ENCODE measurements at regions of chr15 and their contacts with region 1.

Region 1: GRCh38 chr15:56017920-56018319 is 24.5 kb upstream of the NEDD4 start:
- DNase-seq: peak; percentile 83
- ATAC-seq: peak; percentile 92
- H3K4me3 ChIP-seq: peak overlapping the region in 2 of 3 experiments; percentile 14 to 41; a peak in 1 of 6 replicates
- H3K27ac ChIP-seq: no peak overlapping the region
- H3K4me1 ChIP-seq: peaks cover 22% of the 10 kb centered on the region
- H3K27me3 ChIP-seq: no peaks in the 10 kb centered on the region
- CTCF ChIP-seq: peak; percentile 45
- EP300 ChIP-seq: no peak
- POLR2A ChIP-seq: no peak
- RAD21 ChIP-seq: no peak

Region 2: DNA sequence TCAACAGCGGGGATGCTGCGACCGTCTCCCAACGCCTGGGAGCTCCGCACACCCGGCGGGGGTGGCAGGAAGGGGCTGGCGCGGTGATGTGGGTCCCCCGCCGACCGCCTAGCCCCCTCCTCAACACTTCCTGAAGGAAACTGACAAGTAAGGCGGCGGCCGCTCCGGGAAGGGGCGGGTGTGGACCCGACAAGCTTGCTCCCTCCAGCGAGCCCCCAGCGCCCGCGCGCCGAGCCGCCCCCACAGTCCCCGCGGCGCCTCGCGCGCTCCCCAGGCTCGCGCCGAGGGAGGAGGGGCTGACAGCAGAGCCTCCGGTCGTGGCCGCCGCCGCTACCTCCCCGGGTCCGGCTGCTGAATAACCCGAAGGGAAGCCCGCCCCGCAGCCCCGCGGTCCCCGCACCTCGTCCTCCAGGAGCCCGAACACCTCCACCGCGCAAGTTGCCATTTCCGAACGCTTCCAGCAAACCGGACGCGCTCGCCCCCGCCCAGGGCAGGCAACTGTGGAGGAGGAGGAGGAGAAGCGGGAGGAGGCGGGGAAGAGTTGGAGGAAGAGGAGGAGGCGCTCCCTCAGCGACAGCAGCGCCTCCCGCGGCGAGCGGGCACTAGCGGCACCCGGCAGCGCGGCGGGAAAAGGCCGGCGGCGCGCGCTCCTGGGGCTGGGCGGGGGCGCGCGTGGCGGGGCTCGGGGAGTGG is 24.7 kb before region 1 on chr15 and contains the start of gene NEDD4:
- CTCF ChIA-PET with region 1: no interaction called
- POLR2A ChIA-PET with region 1: interaction called, 12 read pairs
- in situ Hi-C with region 1: no loop called
- intact Hi-C with region 1: no loop called
- DNase-seq: peak; percentile 76
- ATAC-seq: peak; percentile 94
- H3K4me3 ChIP-seq: peak within 1 kb of the TSS; percentile 89 to 94 (median 90)
- H3K27ac ChIP-seq: peak within 1 kb of the TSS; percentile 83
- H3K4me1 ChIP-seq: peaks cover 16% of the 10 kb centered on the region
- H3K27me3 ChIP-seq: no peaks in the 10 kb centered on the region; a peak in 1 of 5 replicates
- CTCF ChIP-seq: peak; percentile 79
- EP300 ChIP-seq: no peak
- POLR2A ChIP-seq: peak; percentile 48 to 71
- RAD21 ChIP-seq: peak; percentile 27
- total RNA-seq, gene NEDD4: 13.0 and 25.6 TPM in 2 replicates

Region 3: GRCh38 chr15:56034514-56034913 is 16.6 kb after region 1 on chr15:
- CTCF ChIA-PET with region 1: no interaction called
- POLR2A ChIA-PET with region 1: interaction called, 17 read pairs
- in situ Hi-C with region 1: no loop called
- intact Hi-C with region 1: loop called (anchors 1 kb)
- DNase-seq: no peak
- ATAC-seq: no peak
- H3K4me3 ChIP-seq: no peak overlapping the region
- H3K27ac ChIP-seq: no peak overlapping the region
- H3K4me1 ChIP-seq: peaks cover 20% of the 10 kb centered on the region
- H3K27me3 ChIP-seq: no peaks in the 10 kb centered on the region
- CTCF ChIP-seq: no peak
- EP300 ChIP-seq: no peak
- POLR2A ChIP-seq: no peak
- RAD21 ChIP-seq: no peak

Region 4: DNA sequence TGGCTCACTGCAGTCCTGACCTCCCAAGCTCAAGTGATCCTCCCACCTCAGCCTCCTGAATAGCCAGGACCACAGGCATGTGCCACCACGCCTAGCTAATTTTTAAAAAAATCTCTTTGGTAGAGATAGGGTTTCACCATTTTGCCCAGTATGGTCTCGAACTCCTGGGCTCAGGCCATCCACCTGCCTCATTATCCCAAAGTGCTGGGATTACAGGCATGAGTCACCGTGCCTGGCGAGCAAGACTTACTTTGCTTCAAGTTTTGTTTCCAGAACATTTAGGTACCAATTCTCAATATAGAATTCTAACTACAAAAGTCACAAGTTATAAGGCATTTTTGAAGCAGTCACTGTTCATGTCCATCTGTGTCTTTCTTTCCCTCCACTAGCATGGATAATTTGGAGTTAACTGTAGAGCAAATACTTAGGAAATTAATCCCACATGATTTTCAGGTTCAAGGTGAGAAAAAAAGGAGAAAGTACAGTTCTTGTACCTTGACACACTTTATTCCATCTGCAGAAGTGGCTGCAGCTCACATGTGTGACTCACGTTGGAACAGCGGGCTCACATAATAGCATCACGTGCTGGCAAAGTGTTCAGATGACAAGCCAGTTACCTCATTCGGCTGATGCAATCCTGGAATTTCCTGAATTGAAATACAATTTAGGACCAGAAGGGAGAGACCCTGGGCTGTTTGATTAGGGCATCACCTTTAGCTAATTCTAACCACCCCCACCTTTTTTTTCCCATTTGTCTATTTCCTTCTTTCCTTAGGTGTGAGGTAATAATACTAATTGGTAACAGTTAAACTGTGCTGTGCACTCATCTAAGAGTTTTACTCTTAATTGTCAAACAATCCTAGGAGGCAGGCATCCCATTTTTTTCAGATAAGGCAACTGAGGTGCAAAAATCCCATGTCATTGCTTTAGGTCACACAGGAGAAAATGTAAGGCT is 22.4 kb after region 1 on chr15:
- CTCF ChIA-PET with region 1: no interaction called
- POLR2A ChIA-PET with region 1: interaction called, 17 read pairs
- in situ Hi-C with region 1: no loop called
- intact Hi-C with region 1: no loop called
- DNase-seq: peak; percentile 80
- ATAC-seq: peak; percentile 58
- H3K4me3 ChIP-seq: no peak overlapping the region
- H3K27ac ChIP-seq: peak overlapping the region; percentile 46
- H3K4me1 ChIP-seq: peaks cover 42% of the 10 kb centered on the region
- H3K27me3 ChIP-seq: no peaks in the 10 kb centered on the region
- CTCF ChIP-seq: no peak
- EP300 ChIP-seq: peak; percentile 56 to 83; a peak in 3 of 4 replicates
- POLR2A ChIP-seq: no peak
- RAD21 ChIP-seq: no peak